CD8-positive, alpha-beta T cell (primary cell): ENCODE measurements at regions of chr13 and their contacts with region 1.

Region 1: GRCh38 chr13:26186118-26186870 is 35.8 kb downstream of the RNF6 start:
- DNase-seq: peak; percentile 83 to 98 (median 89)
- ATAC-seq: peak; percentile 79
- H3K4me3 ChIP-seq: peak overlapping the region; percentile 77 to 82
- H3K4me3 Mint-ChIP-seq: peak overlapping the region; percentile 88
- H3K27ac ChIP-seq: peak overlapping the region; percentile 76 to 80
- H3K27ac Mint-ChIP-seq: peak overlapping the region; percentile 95
- H3K4me1 ChIP-seq: peaks cover 9% of the 10 kb centered on the region
- H3K4me1 Mint-ChIP-seq: peaks cover 36% of the 10 kb centered on the region
- H3K27me3 ChIP-seq: no peaks in the 10 kb centered on the region
- H3K27me3 Mint-ChIP-seq: no peaks in the 10 kb centered on the region
- CTCF ChIP-seq: peak; percentile 50

Region 2: DNA sequence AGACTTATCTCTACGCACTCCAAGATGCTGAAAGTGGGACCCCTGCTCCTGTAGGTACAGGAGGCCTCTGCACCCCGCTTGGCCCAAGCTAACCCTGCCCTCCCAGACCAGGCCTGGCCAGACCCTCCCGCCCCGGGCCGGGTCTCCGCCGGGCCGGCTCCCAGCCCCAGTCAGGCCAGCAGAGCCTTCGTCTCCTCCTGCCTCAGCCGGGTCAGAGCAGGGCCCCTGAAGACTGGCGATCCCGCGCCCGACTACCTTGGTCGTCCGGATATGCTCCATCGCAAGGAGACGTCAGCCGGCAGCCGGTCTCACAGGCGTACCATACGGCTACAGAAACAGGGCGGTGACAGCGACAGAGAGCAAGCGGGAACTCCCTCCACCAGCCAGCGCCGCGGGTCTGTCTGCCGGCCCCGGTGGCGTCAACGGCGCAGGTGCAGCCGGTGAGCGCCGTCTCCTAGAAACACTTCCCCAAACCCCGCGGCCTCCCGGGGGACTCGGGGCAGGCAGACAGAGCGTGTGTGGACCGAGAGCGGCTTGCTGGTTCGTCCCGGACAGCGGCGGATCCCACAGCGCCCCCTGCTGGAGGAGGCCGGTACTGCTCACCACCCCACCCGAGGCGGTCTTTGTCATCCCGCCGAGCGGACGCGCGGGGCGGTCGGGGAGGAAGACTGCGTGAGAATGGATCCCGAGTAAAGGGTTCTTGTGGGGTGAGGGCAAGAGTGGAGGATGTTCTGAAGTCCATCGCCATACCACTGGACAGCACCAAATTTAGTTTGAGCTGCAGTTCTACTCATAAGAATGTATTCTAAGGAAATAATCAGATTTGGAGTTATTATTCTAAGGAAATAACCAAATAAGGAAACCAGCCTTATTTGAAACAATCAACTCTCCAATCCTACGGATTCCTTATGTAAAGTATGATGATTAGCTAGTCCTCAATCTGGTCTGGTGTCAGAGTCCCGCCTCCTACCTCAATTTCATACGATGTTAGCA is 899.0 kb before region 1 on chr13 and contains the start of gene MTMR6:
- CTCF ChIA-PET with region 1: no interaction called
- POLR2A ChIA-PET with region 1: no interaction called
- intact Hi-C with region 1: loop called in 1 of 2 experiments (anchors 2 kb)
- DNase-seq: peak; percentile 90 to 98 (median 94)
- ATAC-seq: peak; percentile 81
- H3K4me3 ChIP-seq: peak within 1 kb of the TSS; percentile 83 to 95
- H3K4me3 Mint-ChIP-seq: peak within 1 kb of the TSS; percentile 98
- H3K27ac ChIP-seq: peak within 1 kb of the TSS; percentile 94 to 97
- H3K27ac Mint-ChIP-seq: peak within 1 kb of the TSS; percentile 99
- H3K4me1 ChIP-seq: peaks cover 23% of the 10 kb centered on the region
- H3K4me1 Mint-ChIP-seq: peaks cover 41% of the 10 kb centered on the region
- H3K27me3 ChIP-seq: peaks cover 0 to 2% of the 10 kb centered on the region in 2 experiments
- H3K27me3 Mint-ChIP-seq: peaks cover 10% of the 10 kb centered on the region
- CTCF ChIP-seq: peak; percentile 99
- total RNA-seq, gene MTMR6: 41.9 to 44.4 TPM

Region 3: DNA sequence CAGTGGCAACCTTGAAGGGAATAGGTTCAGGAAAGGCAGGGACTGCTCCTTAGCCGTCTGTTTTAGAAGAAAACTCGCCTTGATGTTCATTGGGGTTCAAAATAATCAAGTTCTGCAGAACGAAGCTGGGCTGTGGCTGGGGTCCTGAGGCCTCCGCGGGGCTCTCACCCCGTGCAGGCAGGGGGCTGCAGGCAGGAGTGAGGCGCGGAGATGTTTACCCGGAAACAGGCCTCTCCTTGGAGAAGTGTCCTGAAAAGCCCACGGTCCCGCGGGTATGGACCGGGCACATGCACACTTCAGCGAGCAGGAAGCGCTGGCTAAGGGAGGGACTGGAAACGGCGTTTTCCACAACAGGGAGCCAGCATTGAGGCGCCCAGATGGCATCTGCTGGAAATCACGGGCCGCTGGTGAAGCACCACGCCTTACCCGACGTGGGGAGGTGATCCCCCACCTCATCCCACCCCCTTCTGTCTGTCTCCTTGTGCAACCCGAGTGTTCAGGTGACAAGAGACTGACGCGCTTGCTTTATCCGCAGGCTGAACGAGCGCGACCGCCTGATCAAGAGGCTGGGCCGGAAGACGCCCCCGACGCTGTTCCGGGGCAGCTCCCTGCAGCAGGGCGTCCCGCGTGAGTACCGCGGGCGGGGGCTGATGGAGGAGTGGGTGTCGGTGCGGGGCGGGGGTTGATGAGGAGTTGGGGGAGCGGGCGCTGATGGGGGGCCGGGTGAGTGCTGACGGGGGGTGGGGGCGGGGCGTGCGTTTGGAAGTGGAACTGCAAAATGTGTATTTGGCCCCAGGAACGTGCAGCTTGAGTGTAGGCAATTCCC is 174.1 kb before region 1 on chr13:
- CTCF ChIA-PET with region 1: no interaction called
- POLR2A ChIA-PET with region 1: no interaction called
- intact Hi-C with region 1: loop called in 1 of 2 experiments (anchors 5 kb)
- DNase-seq: peak; percentile 43 to 91 (median 77)
- ATAC-seq: peak; percentile 96
- H3K4me3 ChIP-seq: peak overlapping the region; percentile 62 to 64
- H3K4me3 Mint-ChIP-seq: peak overlapping the region; percentile 84
- H3K27ac ChIP-seq: peak overlapping the region; percentile 83 to 86
- H3K27ac Mint-ChIP-seq: peak overlapping the region; percentile 97
- H3K4me1 ChIP-seq: peaks cover 21% of the 10 kb centered on the region
- H3K4me1 Mint-ChIP-seq: peaks cover 51% of the 10 kb centered on the region
- H3K27me3 ChIP-seq: no peaks in the 10 kb centered on the region
- H3K27me3 Mint-ChIP-seq: no peaks in the 10 kb centered on the region
- CTCF ChIP-seq: no peak

Region 4: DNA sequence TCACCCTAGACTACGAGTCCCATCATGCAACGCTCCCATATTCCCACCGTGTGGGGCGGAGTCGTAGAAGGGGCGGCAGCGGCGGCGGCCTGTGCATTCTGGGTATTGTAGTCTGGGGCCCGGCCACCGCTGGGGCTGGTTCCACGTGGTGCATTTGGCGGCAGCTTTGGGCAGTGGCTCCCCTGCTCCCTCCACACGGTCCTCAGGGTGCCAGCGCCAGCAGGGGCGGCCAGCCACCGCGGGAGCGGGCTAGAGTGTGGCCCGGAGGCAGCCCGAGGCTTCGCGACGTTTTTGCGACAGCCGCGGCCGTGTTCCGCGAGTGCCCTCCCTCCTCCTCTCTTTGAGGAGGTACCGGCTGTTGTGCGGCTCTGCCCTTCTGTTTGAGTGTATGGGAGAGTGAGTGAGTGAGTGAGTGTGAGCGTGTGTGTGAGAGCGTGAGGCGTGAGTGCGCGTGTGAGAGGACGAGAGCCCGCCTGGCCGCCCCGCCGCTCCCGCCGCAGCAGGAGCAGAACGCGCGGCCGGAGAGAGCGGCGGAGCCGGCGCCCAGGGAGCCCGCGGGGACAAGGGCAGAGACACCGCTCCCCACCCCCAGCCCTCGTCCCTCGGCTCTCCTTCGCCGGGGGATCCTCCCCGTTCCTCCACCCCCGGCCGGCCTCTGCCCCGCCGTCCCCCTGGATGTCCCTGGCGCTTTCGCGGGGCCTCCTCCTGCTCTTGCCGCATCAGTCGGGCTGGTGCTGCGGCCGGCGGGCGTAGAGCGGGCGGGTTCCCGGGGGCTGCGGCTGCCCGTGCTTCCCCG is 67.7 kb after region 1 on chr13 and contains the start of gene CDK8:
- CTCF ChIA-PET with region 1: interaction called, 7 read pairs
- POLR2A ChIA-PET with region 1: interaction called, 4 read pairs
- intact Hi-C with region 1: loop called (anchors 1 kb)
- DNase-seq: peak; percentile 78 to 95 (median 90)
- ATAC-seq: peak; percentile 87
- H3K4me3 ChIP-seq: peak within 1 kb of the TSS; percentile 79 to 100
- H3K4me3 Mint-ChIP-seq: peak within 1 kb of the TSS; percentile 90
- H3K27ac ChIP-seq: peak within 1 kb of the TSS; percentile 59 to 92
- H3K27ac Mint-ChIP-seq: peak within 1 kb of the TSS; percentile 88
- H3K4me1 ChIP-seq: peaks cover 27% of the 10 kb centered on the region
- H3K4me1 Mint-ChIP-seq: peaks cover 37% of the 10 kb centered on the region
- H3K27me3 ChIP-seq: no peaks in the 10 kb centered on the region
- H3K27me3 Mint-ChIP-seq: peaks cover 2% of the 10 kb centered on the region
- CTCF ChIP-seq: no peak
- total RNA-seq, gene CDK8: 4.9 to 5.3 TPM

Region 5: DNA sequence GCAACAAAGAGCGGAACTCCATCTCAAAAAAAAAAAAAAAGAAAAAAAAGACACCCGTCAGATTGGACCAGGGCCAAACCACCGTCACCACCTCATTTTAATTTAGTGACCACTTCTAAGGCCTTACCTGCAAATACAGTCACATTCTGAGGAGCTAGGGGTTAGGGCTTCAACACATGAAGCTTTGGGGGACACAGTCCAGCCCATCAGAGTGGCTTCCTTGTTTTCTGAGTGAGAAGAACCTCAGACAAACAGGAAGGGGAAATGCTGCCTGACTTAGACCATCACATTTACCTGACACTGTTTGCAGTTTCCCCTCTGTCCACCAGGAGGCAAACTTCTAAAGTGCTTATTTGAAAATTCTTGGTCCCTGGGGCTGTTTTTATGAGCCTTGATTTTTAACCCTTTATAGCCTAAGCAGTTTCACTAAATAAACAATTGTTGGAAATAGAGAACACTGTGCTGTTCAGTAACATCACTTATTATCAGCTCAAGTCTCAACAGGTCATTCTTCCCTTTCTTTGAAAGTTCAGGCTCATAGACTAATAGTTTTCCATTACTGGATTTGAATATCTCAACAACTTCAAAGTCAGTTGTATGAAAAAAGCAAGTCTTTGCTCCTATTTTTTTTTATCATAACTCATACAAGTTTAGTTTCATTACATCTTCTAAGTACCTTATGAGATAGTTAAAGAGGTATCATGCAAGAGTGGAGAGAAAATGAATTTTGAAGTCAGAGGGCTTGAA is 296.3 kb after region 1 on chr13:
- CTCF ChIA-PET with region 1: interaction called, 19 read pairs
- POLR2A ChIA-PET with region 1: interaction called, 7 read pairs
- intact Hi-C with region 1: no loop called
- DNase-seq: peak; percentile 21 to 89 (median 72)
- ATAC-seq: peak; percentile 98
- H3K4me3 ChIP-seq: no peak overlapping the region
- H3K4me3 Mint-ChIP-seq: peak overlapping the region; percentile 39
- H3K27ac ChIP-seq: peak overlapping the region in 1 of 2 experiments; percentile 11
- H3K27ac Mint-ChIP-seq: peak overlapping the region; percentile 55
- H3K4me1 ChIP-seq: peaks cover 23% of the 10 kb centered on the region
- H3K4me1 Mint-ChIP-seq: peaks cover 13% of the 10 kb centered on the region
- H3K27me3 ChIP-seq: no peaks in the 10 kb centered on the region
- H3K27me3 Mint-ChIP-seq: no peaks in the 10 kb centered on the region
- CTCF ChIP-seq: peak; percentile 85

Region 6: GRCh38 chr13:26698392-26699196 is 512.3 kb after region 1 on chr13:
- CTCF ChIA-PET with region 1: interaction called, 139 read pairs
- POLR2A ChIA-PET with region 1: interaction called, 8 read pairs
- intact Hi-C with region 1: loop called (anchors 1 kb)
- DNase-seq: peak; percentile 64 to 90 (median 81)
- ATAC-seq: peak; percentile 88
- H3K4me3 ChIP-seq: no peak overlapping the region
- H3K4me3 Mint-ChIP-seq: no peak overlapping the region
- H3K27ac ChIP-seq: no peak overlapping the region
- H3K27ac Mint-ChIP-seq: no peak overlapping the region
- H3K4me1 ChIP-seq: no peaks in the 10 kb centered on the region
- H3K4me1 Mint-ChIP-seq: peaks cover 4% of the 10 kb centered on the region
- H3K27me3 ChIP-seq: no peaks in the 10 kb centered on the region
- H3K27me3 Mint-ChIP-seq: peaks cover 4% of the 10 kb centered on the region
- CTCF ChIP-seq: peak; percentile 97

Region 7: DNA sequence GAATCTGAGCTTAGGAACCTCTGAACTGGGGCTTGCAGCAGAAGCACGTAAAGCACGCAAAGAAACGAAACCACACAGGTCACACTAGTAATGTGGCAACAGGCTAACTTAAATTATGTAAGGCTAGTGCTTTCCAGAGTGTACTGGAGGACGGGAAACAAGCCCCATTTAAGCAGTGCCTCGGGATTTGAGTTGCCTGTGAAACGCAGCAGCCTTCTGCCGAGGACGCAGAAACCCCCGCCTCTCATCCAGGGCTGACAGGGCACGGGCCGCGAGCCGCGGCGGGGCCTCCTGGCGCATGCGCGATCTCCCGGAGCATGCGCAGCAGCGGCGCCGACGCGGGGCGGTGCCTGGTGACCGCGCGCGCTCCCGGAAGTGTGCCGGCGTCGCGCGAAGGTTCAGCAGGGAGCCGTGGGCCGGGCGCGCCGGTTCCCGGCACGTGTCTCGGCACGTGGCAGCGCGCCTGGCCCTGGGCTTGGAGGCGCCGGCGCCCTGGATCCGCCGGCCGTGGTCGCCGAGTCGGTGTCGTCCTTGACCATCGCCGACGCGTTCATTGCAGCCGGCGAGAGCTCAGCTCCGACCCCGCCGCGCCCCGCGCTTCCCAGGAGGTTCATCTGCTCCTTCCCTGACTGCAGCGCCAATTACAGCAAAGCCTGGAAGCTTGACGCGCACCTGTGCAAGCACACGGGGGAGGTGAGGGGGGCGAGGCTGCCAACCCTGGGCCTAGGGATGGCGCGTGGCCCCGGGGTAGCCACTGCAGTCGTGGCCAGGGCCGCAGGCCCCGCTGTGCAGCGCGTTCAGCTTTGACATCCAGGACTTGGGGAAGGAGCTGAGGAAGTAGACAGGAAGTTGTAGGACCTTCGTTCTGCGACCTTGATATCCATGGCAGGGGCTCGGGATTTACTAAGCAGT is 1238.2 kb after region 1 on chr13 and contains the start of gene GTF3A:
- CTCF ChIA-PET with region 1: no interaction called
- POLR2A ChIA-PET with region 1: interaction called, 4 read pairs
- intact Hi-C with region 1: loop called in 1 of 2 experiments (anchors 10 kb)
- DNase-seq: peak; percentile 74 to 95 (median 87)
- ATAC-seq: peak; percentile 57
- H3K4me3 ChIP-seq: peak within 1 kb of the TSS; percentile 76 to 83
- H3K4me3 Mint-ChIP-seq: peak within 1 kb of the TSS; percentile 82
- H3K27ac ChIP-seq: peak within 1 kb of the TSS; percentile 85 to 95
- H3K27ac Mint-ChIP-seq: peak within 1 kb of the TSS; percentile 97
- H3K4me1 ChIP-seq: peaks cover 43% of the 10 kb centered on the region
- H3K4me1 Mint-ChIP-seq: peaks cover 48% of the 10 kb centered on the region
- H3K27me3 ChIP-seq: no peaks in the 10 kb centered on the region
- H3K27me3 Mint-ChIP-seq: no peaks in the 10 kb centered on the region
- CTCF ChIP-seq: no peak
- total RNA-seq, gene GTF3A: 157 TPM